Ascending aorta (tissue), 2 donors: ENCODE measurements at regions of chr2 and their contacts with region 1.

Region 1: GRCh38 chr2:24382363-24383073 is 22.2 kb upstream of the ITSN2 start:
- DNase-seq: peak in 1 of 2 donors; percentile 73
- H3K4me3 ChIP-seq: no peak overlapping the region
- H3K27ac ChIP-seq: no peak overlapping the region
- H3K4me1 ChIP-seq: no peaks in the 10 kb centered on the region
- H3K27me3 ChIP-seq: no peaks in the 10 kb centered on the region
- CTCF ChIP-seq: peak; percentile 55 to 91 (median 88)

Region 2: DNA sequence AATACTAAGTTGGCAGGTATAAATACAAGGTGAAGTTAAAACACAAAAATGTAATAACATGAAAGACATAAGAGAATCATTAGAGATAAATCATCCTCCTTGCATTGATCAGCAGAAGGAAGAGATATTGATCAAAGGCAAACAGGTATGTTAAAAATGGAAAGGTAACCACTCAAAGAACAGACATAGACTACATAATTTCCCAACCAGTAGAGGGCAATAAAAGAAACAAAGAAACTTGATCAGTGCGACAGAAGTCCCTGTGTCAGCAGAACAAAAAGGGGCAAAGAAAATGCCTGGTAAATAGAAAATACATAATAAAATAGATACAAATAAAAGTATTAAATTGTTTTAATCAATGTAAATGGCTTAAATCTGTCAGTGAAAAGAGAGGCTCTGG is 154.0 kb before region 1 on chr2:
- intact Hi-C with region 1: loop called (anchors 2 kb)
- DNase-seq: no peak
- H3K4me3 ChIP-seq: no peak overlapping the region
- H3K27ac ChIP-seq: no peak overlapping the region
- H3K4me1 ChIP-seq: no peaks in the 10 kb centered on the region
- H3K27me3 ChIP-seq: no peaks in the 10 kb centered on the region
- CTCF ChIP-seq: peak in 2 of 3 experiments; percentile 16 to 36